GM12878 (cell line): ENCODE measurements at regions of chr14 and their contacts with region 1.

Region 1: DNA sequence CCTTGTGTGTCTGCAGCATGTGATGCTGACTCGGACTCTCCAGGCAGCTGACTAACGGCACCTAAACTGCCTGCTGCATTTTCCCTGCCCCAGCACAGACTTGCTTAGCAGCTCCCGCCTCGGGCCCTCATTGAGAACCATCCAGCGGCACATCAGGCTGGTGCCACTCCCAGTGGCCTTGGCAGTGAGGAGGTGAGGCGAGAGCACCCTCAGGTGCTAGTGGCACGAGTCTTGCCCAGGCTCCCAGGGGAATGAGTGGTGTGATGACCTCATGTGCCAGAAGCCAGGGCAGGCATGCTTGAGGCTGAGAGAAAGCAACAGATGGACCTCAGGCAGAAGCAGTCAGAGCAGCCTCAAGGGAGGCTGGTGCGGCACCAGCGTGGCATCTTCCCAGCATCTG is 60.2 kb downstream of the PRKCH start:
- DNase-seq: no peak
- ATAC-seq: peak; percentile 5
- H3K4me3 ChIP-seq: no peak overlapping the region
- H3K27ac ChIP-seq: no peak overlapping the region; the same call in 1 of the 2 replicates
- H3K4me1 ChIP-seq: peaks cover 55% of the 10 kb centered on the region
- H3K27me3 ChIP-seq: no peaks in the 10 kb centered on the region
- CTCF ChIP-seq: no peak
- EP300 ChIP-seq: no peak
- POLR2A ChIP-seq: no peak
- RAD21 ChIP-seq: no peak

Region 2: DNA sequence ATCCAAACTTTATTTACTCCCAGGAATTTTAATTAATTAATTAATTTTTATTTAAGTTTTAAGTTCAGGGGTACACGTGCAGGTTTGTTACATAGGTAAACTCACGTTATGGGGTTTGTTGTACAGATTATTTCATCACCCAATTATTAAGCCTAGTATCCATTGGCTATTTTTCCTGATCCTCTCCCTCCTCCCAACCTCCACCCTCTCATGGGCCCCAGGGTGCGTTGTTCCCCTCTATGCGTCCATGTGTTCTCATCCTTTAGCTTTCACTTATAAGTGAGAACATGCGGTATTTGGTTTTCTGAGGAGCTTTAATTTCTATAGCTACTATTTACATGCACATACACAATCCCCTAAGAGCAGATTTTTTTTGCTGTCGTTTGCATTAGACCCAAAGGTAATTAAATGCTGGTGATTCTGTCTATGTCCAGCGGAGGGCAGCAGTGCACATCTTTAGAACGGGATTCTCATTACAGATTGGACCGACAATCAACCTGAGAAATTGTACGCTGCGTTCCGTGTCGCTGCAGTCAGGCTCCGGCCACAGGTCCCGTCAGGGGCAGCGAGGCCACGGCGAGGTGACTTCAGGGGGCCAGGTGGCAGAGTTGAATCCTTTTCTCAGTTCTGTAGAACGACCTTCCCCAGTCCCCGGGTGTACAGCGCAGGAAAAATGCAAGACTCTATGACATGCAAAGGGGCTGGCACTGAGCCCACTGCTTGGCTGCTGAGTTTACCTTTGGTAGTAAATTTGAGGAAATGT is 112.0 kb before region 1 on chr14:
- CTCF ChIA-PET with region 1: no interaction called
- POLR2A ChIA-PET with region 1: no interaction called
- RAD21 ChIA-PET with region 1: no interaction called
- SMC1A ChIA-PET with region 1: no interaction called
- in situ Hi-C with region 1: no loop called
- intact Hi-C with region 1: no loop called
- DNase-seq: peak; percentile 45
- ATAC-seq: peak; percentile 97
- H3K4me3 ChIP-seq: peak overlapping the region; percentile 49; the same call in 1 of the 2 replicates
- H3K27ac ChIP-seq: no peak overlapping the region
- H3K4me1 ChIP-seq: no peaks in the 10 kb centered on the region
- H3K27me3 ChIP-seq: peaks cover 0 to 5% of the 10 kb centered on the region in 2 experiments; a peak in 1 of 4 replicates
- CTCF ChIP-seq: peak; percentile 66 to 75 (median 74)
- EP300 ChIP-seq: no peak
- POLR2A ChIP-seq: no peak
- RAD21 ChIP-seq: peak; percentile 84

Region 3: GRCh38 chr14:61342486-61342885 is 39.1 kb before region 1 on chr14:
- CTCF ChIA-PET with region 1: interaction called, 5 read pairs
- POLR2A ChIA-PET with region 1: interaction called, 7 read pairs
- RAD21 ChIA-PET with region 1: interaction called, 25 read pairs
- SMC1A ChIA-PET with region 1: interaction called, 36 read pairs
- in situ Hi-C with region 1: no loop called
- intact Hi-C with region 1: loop called (anchors 5 kb)
- DNase-seq: peak; percentile 67
- ATAC-seq: peak; percentile 70
- H3K4me3 ChIP-seq: peak overlapping the region; percentile 57
- H3K27ac ChIP-seq: peak overlapping the region; percentile 74
- H3K4me1 ChIP-seq: peaks cover 63% of the 10 kb centered on the region
- H3K27me3 ChIP-seq: no peaks in the 10 kb centered on the region
- CTCF ChIP-seq: no peak
- EP300 ChIP-seq: peak; percentile 32 to 44; a peak in 1 of 4 replicates
- POLR2A ChIP-seq: no peak
- RAD21 ChIP-seq: no peak

Region 4: DNA sequence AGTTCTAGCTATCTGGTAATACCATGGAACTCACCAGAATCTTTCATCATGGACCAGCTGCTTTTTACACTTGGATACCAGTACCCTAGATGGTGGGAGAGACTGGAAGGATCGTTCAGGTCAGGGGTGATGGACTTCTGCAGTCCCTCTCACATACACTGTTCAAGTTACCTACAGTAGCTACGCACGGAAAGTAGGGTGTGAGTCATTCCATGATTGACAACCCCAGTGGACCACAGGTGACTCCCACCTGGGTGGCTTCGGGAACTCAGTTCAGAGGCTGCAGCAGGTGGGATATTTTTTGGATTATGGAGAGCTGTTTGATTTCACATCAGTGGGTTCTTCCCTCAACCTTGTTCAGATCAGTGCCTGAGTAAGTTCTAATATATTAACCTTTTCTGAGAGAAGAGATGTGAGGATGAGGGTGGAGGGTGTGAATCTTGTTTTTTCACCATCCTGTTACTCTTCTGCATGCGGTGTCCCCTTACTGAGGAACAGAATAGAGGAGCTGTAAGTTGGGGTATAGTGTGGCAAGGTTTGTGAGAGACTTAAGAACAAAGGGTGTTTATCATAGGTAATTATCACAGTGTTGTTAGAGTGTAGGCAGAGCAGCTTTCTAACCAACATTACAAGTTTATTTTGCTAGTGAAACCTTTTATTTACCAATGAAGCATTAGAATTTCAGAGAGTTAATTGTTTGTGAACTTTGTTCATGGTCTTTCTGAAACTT is 20.6 kb before region 1 on chr14:
- CTCF ChIA-PET with region 1: interaction called, 4 read pairs
- POLR2A ChIA-PET with region 1: interaction called, 29 read pairs
- RAD21 ChIA-PET with region 1: no interaction called
- SMC1A ChIA-PET with region 1: interaction called, 19 read pairs
- in situ Hi-C with region 1: no loop called
- intact Hi-C with region 1: no loop called
- DNase-seq: no peak
- ATAC-seq: peak; percentile 42
- H3K4me3 ChIP-seq: no peak overlapping the region
- H3K27ac ChIP-seq: no peak overlapping the region
- H3K4me1 ChIP-seq: peaks cover 21% of the 10 kb centered on the region
- H3K27me3 ChIP-seq: no peaks in the 10 kb centered on the region
- CTCF ChIP-seq: no peak
- EP300 ChIP-seq: no peak
- POLR2A ChIP-seq: no peak
- RAD21 ChIP-seq: no peak

Region 5: GRCh38 chr14:61368114-61368726 is 13.3 kb before region 1 on chr14:
- CTCF ChIA-PET with region 1: interaction called, 14 read pairs
- POLR2A ChIA-PET with region 1: interaction called, 29 read pairs
- RAD21 ChIA-PET with region 1: interaction called, 3 read pairs
- SMC1A ChIA-PET with region 1: interaction called, 19 read pairs
- in situ Hi-C with region 1: no loop called
- intact Hi-C with region 1: no loop called
- DNase-seq: no peak
- ATAC-seq: 0 out of 3 replicates have a peak, but pooled peaks have one; percentile 9
- H3K4me3 ChIP-seq: no peak overlapping the region
- H3K27ac ChIP-seq: peak overlapping the region; percentile 36
- H3K4me1 ChIP-seq: peaks cover 46% of the 10 kb centered on the region
- H3K27me3 ChIP-seq: no peaks in the 10 kb centered on the region
- CTCF ChIP-seq: no peak
- EP300 ChIP-seq: no peak
- POLR2A ChIP-seq: no peak
- RAD21 ChIP-seq: no peak